ENCODE measurements at regions of chr11 and their contacts with region 1.

Region 1: GRCh38 chr11:126917531-126918204 is 82.9 kb downstream of the KIRREL3 start:
- DNase-seq: peak; percentile 96
- H3K4me3 ChIP-seq: no peak overlapping the region
- H3K27ac ChIP-seq: peak overlapping the region; percentile 99
- H3K4me1 ChIP-seq: peaks cover 19% of the 10 kb centered on the region
- H3K27me3 ChIP-seq: no peaks in the 10 kb centered on the region
- CTCF ChIP-seq: no peak

Region 2: GRCh38 chr11:126963603-126964363 is 46.1 kb after region 1 on chr11:
- CTCF ChIA-PET with region 1: no interaction called
- dilution Hi-C with region 1: no loop called
- in situ Hi-C with region 1: loop called in 1 of 2 experiments (anchors 5 kb)
- intact Hi-C with region 1: no loop called
- DNase-seq: peak; percentile 88
- H3K4me3 ChIP-seq: no peak overlapping the region
- H3K27ac ChIP-seq: peak overlapping the region; percentile 93
- H3K4me1 ChIP-seq: peaks cover 21% of the 10 kb centered on the region
- H3K27me3 ChIP-seq: no peaks in the 10 kb centered on the region
- CTCF ChIP-seq: no peak

Region 3: GRCh38 chr11:127110542-127110941 is 192.9 kb after region 1 on chr11:
- CTCF ChIA-PET with region 1: no interaction called
- dilution Hi-C with region 1: no loop called
- in situ Hi-C with region 1: no loop called
- intact Hi-C with region 1: no loop called
- DNase-seq: no peak
- H3K4me3 ChIP-seq: no peak overlapping the region
- H3K27ac ChIP-seq: no peak overlapping the region
- H3K4me1 ChIP-seq: no peaks in the 10 kb centered on the region
- H3K27me3 ChIP-seq: peaks cover 2% of the 10 kb centered on the region
- CTCF ChIP-seq: no peak